ENCODE measurements at regions of chr1 and their contacts with region 1.

Region 1: GRCh38 chr1:167950569-167950968 is 13.7 kb upstream of the MPC2 start:
- DNase-seq: no peak

Region 2: GRCh38 chr1:167936068-167936929 is 14.3 kb before region 1 on chr1 and contains the start of gene DCAF6:
- CTCF ChIA-PET with region 1: no interaction called
- POLR2A ChIA-PET with region 1: interaction called, 11 read pairs
- DNase-seq: peak; percentile 97

Region 3: GRCh38 chr1:168007691-168008090 is 57.1 kb after region 1 on chr1:
- CTCF ChIA-PET with region 1: no interaction called
- POLR2A ChIA-PET with region 1: no interaction called
- DNase-seq: no peak